H1 (cell line): ENCODE measurements at regions of chr11 and their contacts with region 1.

Region 1: GRCh38 chr11:58654079-58654907 is 31.8 kb downstream of the CNTF start:
- DNase-seq: peak; percentile 69 to 88
- H3K4me3 ChIP-seq: no peak overlapping the region
- H3K27ac ChIP-seq: no peak overlapping the region
- H3K4me1 ChIP-seq: peaks cover 0 to 7% (median 3%) of the 10 kb centered on the region in 4 experiments; a peak in 3 of 7 replicates
- H3K27me3 ChIP-seq: no peaks in the 10 kb centered on the region
- CTCF ChIP-seq: peak; percentile 87 to 93 (median 93)
- EP300 ChIP-seq: no peak
- POLR2A ChIP-seq: no peak
- RAD21 ChIP-seq: peak; percentile 78 to 82

Region 2: GRCh38 chr11:58629857-58630256 is 24.4 kb before region 1 on chr11:
- CTCF ChIA-PET with region 1: interaction called, 14 read pairs
- POLR2A ChIA-PET with region 1: interaction called, 3 read pairs
- DNase-seq: no peak
- H3K4me3 ChIP-seq: no peak overlapping the region
- H3K27ac ChIP-seq: no peak overlapping the region
- H3K4me1 ChIP-seq: peaks cover 0 to 4% (median 1%) of the 10 kb centered on the region in 4 experiments; a peak in 2 of 7 replicates
- H3K27me3 ChIP-seq: no peaks in the 10 kb centered on the region
- CTCF ChIP-seq: peak in 2 of 3 experiments; percentile 69 to 75; a peak in 3 of 4 replicates
- EP300 ChIP-seq: no peak
- POLR2A ChIP-seq: peak in 1 of 2 experiments; percentile 31; a peak in 1 of 3 replicates
- RAD21 ChIP-seq: peak; percentile 55 to 65

Region 3: GRCh38 chr11:58640386-58641023 is 13.8 kb before region 1 on chr11:
- CTCF ChIA-PET with region 1: interaction called, 15 read pairs
- POLR2A ChIA-PET with region 1: no interaction called
- DNase-seq: no peak
- H3K4me3 ChIP-seq: no peak overlapping the region
- H3K27ac ChIP-seq: no peak overlapping the region
- H3K4me1 ChIP-seq: no peaks in the 10 kb centered on the region
- H3K27me3 ChIP-seq: no peaks in the 10 kb centered on the region; a peak in 1 of 7 replicates
- CTCF ChIP-seq: no peak
- EP300 ChIP-seq: no peak
- POLR2A ChIP-seq: no peak
- RAD21 ChIP-seq: no peak

Region 4: DNA sequence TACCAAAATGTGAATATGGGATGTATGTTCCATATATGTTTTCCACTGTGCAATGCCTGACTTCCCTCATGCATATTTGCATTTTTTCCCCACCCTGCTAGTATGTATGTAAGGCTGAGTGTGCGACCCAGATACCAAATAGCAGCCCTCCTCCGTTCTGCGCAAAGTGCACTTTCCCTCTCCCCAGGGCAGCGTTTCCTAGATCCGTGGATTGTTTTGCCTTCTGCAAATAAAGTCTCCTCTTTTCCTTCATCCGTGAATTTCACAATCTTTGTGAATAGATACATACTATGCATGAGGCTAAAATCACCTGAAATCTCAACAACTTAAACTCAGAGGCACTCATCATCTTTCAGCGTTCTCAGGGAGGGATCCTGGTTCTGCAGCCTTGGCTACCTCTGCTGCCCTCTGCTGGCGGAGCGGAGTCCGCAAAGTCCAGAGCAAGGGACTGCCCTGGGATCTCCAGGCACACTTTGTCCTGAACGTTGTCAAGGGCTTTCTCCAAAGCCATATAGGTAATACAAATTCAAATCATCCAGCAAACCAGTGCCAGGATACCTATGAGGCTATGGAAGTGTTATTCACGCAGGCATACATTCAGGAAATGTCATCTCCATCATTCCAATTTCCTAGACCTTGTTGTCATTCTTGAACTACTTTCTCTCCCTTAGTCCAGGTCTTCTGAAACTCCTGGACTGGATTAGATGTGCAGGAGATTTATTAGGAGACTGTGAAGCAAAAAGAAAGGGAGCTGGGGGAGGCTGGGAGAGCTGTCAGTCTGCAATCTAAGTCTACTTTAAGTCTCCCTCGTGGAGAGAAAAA is 21.3 kb after region 1 on chr11:
- CTCF ChIA-PET with region 1: interaction called, 17 read pairs
- POLR2A ChIA-PET with region 1: no interaction called
- DNase-seq: peak; percentile 36 to 87
- H3K4me3 ChIP-seq: no peak overlapping the region
- H3K27ac ChIP-seq: no peak overlapping the region
- H3K4me1 ChIP-seq: no peaks in the 10 kb centered on the region
- H3K27me3 ChIP-seq: no peaks in the 10 kb centered on the region
- CTCF ChIP-seq: peak; percentile 83 to 98 (median 95)
- EP300 ChIP-seq: no peak
- POLR2A ChIP-seq: no peak
- RAD21 ChIP-seq: peak; percentile 72 to 73

Region 5: DNA sequence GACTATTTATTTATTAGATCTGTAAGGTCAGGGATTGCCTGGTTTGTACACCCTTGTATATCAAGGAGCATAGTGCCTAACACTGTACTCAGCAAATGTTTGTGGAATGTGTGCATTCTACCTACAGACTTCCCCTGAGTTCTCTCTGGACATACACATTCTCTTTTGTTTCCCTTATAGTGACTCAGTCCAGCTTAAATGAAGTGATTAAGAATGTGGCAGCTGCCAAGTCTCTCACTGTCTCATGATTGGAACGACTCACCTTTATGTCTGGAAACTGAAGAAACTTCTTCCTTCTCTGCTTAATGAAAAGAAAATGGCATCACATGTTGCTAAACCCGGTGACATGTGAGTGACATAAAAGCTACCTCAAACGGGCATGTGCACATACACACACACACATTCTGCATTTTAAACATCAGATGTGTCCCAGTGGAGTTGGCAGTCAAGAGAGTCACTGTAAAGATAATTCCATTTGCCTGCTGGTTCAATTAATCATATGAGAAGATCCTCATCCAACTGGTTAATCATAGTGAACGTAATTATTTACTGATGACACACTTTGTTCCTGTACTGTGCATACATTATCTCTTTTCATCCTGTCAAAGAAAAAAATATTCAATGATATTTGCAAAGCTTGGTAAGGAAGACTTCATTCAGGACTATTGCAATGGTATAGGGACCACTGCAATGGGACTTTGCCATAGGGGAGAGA is 34.7 kb after region 1 on chr11:
- CTCF ChIA-PET with region 1: no interaction called
- POLR2A ChIA-PET with region 1: no interaction called
- DNase-seq: no peak
- H3K4me3 ChIP-seq: no peak overlapping the region
- H3K27ac ChIP-seq: no peak overlapping the region
- H3K4me1 ChIP-seq: no peaks in the 10 kb centered on the region
- H3K27me3 ChIP-seq: no peaks in the 10 kb centered on the region
- CTCF ChIP-seq: no peak
- EP300 ChIP-seq: no peak
- POLR2A ChIP-seq: no peak
- RAD21 ChIP-seq: no peak

Region 6: DNA sequence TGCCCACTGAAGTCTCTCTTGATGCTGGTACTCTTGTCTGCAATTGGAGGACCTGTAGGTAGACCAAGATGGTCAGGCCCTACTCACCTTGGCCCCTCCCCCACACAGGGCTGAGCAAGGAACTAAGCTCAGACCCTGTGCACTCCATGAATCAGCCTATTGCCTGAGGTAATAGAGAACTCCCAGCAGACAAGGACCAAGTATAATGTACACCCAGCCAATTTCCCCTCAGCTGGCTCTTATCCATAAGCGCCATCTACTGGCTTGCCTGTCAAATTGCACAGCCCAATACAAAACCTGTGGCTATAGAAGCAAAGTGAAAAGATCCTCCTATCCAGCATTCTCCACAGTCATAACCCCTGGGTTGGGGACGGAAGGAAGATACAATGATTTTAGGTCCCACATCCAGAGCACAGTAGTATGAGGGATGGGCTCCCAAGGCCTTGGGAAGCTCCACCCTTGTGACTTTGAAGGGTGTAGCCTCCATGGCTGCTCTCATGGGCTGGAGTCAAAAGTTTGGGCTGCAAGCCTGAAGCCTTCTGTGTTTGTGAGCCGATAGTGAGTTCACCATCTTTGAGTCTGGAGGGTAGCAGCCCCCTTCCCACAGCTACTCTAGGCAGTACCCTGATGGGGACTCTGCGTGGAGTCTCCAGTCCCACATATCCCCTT is 134.2 kb after region 1 on chr11:
- CTCF ChIA-PET with region 1: interaction called, 24 read pairs
- POLR2A ChIA-PET with region 1: no interaction called
- DNase-seq: peak in 1 of 2 experiments; percentile 46
- H3K4me3 ChIP-seq: no peak overlapping the region
- H3K27ac ChIP-seq: no peak overlapping the region
- H3K4me1 ChIP-seq: no peaks in the 10 kb centered on the region
- H3K27me3 ChIP-seq: peaks cover 0 to 1% (median 0%) of the 10 kb centered on the region in 4 experiments; a peak in 1 of 7 replicates
- CTCF ChIP-seq: peak; percentile 2 to 79 (median 69)
- EP300 ChIP-seq: no peak
- POLR2A ChIP-seq: no peak
- RAD21 ChIP-seq: peak; percentile 74 to 80

Region 7: GRCh38 chr11:58900479-58901420 is 246.5 kb after region 1 on chr11:
- CTCF ChIA-PET with region 1: interaction called, 52 read pairs
- POLR2A ChIA-PET with region 1: interaction called, 3 read pairs
- DNase-seq: peak; percentile 95 to 98
- H3K4me3 ChIP-seq: peak overlapping the region; percentile 38 to 59 (median 46); a peak in 6 of 8 replicates
- H3K27ac ChIP-seq: no peak overlapping the region
- H3K4me1 ChIP-seq: peaks cover 0 to 6% (median 2%) of the 10 kb centered on the region in 4 experiments; a peak in 3 of 7 replicates
- H3K27me3 ChIP-seq: no peaks in the 10 kb centered on the region; a peak in 3 of 7 replicates
- CTCF ChIP-seq: peak; percentile 74 to 86 (median 77)
- EP300 ChIP-seq: no peak; a peak in 1 of 3 replicates
- POLR2A ChIP-seq: no peak
- RAD21 ChIP-seq: peak; percentile 82

Region 8: DNA sequence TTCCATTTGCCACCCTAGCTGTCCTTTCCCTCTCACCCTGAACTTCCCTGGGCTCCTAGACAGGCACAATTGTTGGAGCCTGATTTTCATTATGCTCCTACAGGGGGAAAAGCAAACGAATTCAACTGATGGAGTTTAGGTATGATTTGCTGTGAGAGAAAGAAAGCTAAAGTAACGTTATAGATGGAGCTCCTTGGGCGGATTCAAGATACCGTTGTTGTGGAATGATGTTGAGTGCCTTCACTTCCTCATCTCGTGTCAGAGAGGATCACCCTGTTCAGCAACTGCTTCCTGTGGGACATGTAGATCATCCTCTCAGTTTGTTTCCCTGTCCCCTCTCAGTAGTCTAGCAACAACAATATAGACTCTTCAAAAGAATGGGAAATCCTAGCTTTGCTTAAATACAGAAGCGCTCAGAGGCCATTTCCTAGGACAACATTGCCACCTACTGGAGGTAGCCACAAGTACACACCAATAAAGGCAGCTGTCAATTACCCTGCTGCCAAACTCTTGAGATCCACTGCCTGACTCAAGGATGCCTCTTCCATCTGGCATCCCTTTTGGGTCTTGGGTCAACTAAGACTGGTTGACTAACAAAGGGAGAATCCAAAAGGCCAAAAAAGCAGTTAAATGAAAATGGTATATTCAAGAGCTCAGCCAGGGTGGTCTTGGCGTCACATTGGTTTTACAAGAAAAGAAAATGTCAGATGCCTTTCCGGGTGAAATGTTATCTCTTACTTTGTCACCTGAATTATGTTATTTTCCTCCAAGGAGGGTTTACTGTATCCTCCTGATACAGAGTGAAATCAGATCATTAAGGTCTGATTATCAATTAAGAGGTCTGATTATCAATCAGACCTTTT is 504.1 kb after region 1 on chr11:
- CTCF ChIA-PET with region 1: interaction called, 13 read pairs
- POLR2A ChIA-PET with region 1: no interaction called
- DNase-seq: peak in 1 of 2 experiments; percentile 67
- H3K4me3 ChIP-seq: no peak overlapping the region
- H3K27ac ChIP-seq: no peak overlapping the region; the same call in 1 of the 2 replicates
- H3K4me1 ChIP-seq: peaks cover 0 to 4% (median 0%) of the 10 kb centered on the region in 4 experiments; a peak in 2 of 7 replicates
- H3K27me3 ChIP-seq: no peaks in the 10 kb centered on the region
- CTCF ChIP-seq: peak; percentile 29 to 87 (median 80)
- EP300 ChIP-seq: no peak
- POLR2A ChIP-seq: no peak
- RAD21 ChIP-seq: peak; percentile 91 to 92